Ovary (tissue), 10 donors: ENCODE measurements at regions of chr3 and their contacts with region 1.

Region 1: GRCh38 chr3:12187448-12188327 is 29.0 kb upstream of the TIMP4 start:
- DNase-seq: peak in 4 of 5 donors; percentile 40 to 70 (median 64)
- H3K4me3 ChIP-seq: no peak overlapping the region
- H3K27ac ChIP-seq: peak overlapping the region in 1 of 2 donors; percentile 36
- H3K4me1 ChIP-seq: peaks cover 15% of the 10 kb centered on the region
- H3K27me3 ChIP-seq: no peaks in the 10 kb centered on the region
- CTCF ChIP-seq: no peak
- EP300 ChIP-seq: no peak
- POLR2A ChIP-seq: no peak

Region 2: GRCh38 chr3:12229903-12230302 is 42.2 kb after region 1 on chr3:
- intact Hi-C with region 1: loop called in 1 of 4 experiments (anchors 5 kb)
- DNase-seq: no peak
- H3K4me3 ChIP-seq: no peak overlapping the region
- H3K27ac ChIP-seq: no peak overlapping the region
- H3K4me1 ChIP-seq: no peaks in the 10 kb centered on the region
- H3K27me3 ChIP-seq: no peaks in the 10 kb centered on the region
- CTCF ChIP-seq: no peak
- EP300 ChIP-seq: no peak
- POLR2A ChIP-seq: no peak

Region 3: GRCh38 chr3:12287727-12288191 is 100.1 kb after region 1 on chr3:
- intact Hi-C with region 1: loop called in 1 of 4 experiments (anchors 10 kb)
- DNase-seq: peak; percentile 49 to 78 (median 75)
- H3K4me3 ChIP-seq: peak overlapping the region; percentile 75
- H3K27ac ChIP-seq: peak overlapping the region; percentile 77 to 87
- H3K4me1 ChIP-seq: peaks cover 4% of the 10 kb centered on the region
- H3K27me3 ChIP-seq: no peaks in the 10 kb centered on the region
- CTCF ChIP-seq: no peak
- EP300 ChIP-seq: no peak
- POLR2A ChIP-seq: no peak